ENCODE measurements at regions of chr5 and their contacts with region 1.

Region 1: DNA sequence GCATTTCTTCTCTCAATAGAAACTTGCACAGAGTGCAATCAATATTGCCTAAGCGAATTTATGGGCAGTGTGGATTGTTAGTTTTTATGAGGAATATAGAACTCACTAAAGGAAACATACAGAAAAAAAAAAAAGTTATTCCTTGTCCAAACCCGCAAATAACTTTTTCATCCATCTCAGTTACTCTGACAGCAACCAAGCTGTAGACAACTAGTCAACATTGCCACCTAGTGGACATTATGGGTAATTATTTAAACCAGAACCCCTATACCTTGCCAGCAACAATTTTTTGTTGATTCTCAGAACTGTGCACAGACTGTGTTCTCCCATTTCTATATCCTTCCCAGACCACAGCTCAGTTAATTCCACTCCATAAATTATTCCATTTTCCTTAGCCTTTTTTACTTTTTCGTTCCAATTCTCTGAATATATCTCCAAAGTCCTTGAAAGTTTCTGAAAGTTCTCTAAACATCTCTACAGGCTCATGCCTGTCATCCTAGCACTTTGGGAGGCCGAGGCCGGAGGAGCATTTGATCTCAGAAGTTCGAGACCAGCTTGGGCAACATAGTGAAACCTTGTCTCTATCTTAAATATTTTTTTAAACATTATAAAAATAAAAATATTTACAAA is 2.6 kb upstream of the AFAP1L1 start:
- DNase-seq: no peak
- H3K4me3 ChIP-seq: no peak overlapping the region
- H3K27ac ChIP-seq: no peak overlapping the region
- H3K27me3 ChIP-seq: no peaks in the 10 kb centered on the region
- CTCF ChIP-seq: peak; percentile 48 to 98 (median 82)

Region 2: DNA sequence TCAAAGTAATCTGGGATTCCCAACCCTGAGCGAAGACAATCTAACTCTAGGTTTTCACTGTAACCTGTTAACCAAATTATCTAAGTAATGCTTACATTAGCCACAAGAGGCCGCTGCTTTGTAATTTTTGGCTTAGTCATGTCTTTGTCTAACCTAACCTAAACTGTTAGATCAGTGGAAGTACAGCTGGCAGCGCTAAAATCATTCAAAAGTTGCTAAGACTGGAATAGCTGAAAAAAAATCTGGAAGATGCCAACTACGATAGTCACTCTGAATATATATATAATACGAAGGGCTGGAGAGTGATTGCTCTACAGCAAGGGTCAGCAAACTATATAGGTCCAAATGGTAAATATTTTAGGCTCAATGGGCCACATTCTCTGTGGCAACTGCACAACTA is 825.0 kb before region 1 on chr5:
- intact Hi-C with region 1: loop called in 1 of 2 experiments (anchors 10 kb)
- DNase-seq: peak in 3 of 10 donors; percentile 26 to 56 (median 42)
- H3K4me3 ChIP-seq: no peak overlapping the region
- H3K27ac ChIP-seq: no peak overlapping the region
- H3K27me3 ChIP-seq: no peaks in the 10 kb centered on the region
- CTCF ChIP-seq: peak; percentile 74 to 96 (median 87)

Region 3: DNA sequence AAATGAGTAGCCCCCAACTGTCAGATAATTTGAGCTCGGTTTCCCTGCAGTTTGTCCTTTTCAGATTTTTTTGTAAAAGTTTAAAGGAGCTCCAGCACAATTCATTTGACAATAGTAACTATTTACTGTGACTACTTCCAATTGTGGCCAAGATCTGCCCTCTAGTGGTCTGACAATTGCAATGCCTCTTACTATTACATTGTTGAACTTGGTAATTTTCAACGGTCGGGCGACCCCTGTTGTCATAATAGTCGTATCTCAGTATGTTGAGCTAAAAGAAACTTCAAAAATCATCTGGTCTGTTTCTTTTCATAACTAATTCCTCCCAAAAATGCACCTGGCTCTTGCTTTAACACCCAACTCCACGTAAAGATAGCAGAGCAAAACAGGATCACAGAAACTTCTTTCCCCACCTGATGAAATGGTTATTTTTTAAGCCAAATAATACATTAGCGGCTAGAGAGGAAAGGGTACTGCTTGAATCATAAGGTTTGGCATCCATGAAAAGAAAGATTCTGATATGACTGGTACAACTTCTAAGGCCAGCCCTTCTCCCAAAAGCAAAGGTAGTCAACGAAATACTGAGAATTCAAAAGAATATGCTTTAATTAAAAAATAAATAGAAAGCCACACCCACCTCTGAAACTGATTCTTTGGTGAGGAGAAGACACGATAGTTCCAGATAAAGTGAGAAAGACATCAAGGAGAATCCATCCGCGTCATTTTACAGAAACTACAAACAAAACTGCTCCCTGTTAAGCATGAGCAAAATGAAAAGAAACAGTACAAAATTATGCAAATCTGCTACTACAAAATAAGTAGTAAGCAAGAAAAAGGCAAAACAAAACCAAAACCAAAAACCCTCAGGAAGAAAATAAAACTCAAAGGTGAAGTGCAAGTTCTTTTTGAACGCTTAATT is 537.8 kb before region 1 on chr5:
- intact Hi-C with region 1: loop called (anchors 2 to 10 kb)
- DNase-seq: peak in 9 of 10 donors; percentile 27 to 90 (median 65)
- H3K4me3 ChIP-seq: peak overlapping the region in 16 of 59 donors; percentile 2 to 35 (median 16)
- H3K27ac ChIP-seq: peak overlapping the region in 2 of 59 donors; percentile 0 to 34
- H3K27me3 ChIP-seq: peaks cover 0 to 4% (median 0%) of the 10 kb centered on the region in 45 donors
- CTCF ChIP-seq: peak in 55 of 56 donors; percentile 93 to 100 (median 99)

Region 4: DNA sequence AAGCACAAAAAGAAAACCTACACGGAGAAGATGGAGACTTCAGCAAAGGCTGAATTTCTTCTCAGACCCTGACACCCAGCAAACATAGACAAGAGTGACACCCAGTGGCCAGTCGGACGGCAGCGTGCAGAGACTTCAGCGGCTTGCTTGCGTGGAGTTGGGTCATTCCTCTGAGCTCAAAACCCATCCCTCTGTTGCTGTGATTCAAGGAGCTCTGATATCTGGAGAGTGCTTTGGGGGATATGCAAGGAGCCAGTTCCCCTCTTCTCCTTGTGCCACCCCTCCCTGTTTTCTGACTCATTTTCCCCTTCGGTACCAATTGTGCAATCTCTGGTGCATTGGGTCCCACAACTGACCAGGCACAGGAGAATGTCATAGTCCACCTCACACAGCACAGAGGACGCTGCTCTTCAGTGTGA is 233.7 kb before region 1 on chr5:
- intact Hi-C with region 1: loop called in 1 of 2 experiments (anchors 10 kb)
- DNase-seq: peak; percentile 72 to 88 (median 82)
- H3K4me3 ChIP-seq: no peak overlapping the region
- H3K27ac ChIP-seq: peak overlapping the region in 25 of 59 donors; percentile 1 to 82 (median 24)
- H3K27me3 ChIP-seq: no peaks in the 10 kb centered on the region
- CTCF ChIP-seq: peak; percentile 60 to 95 (median 89)

Region 5: GRCh38 chr5:149063017-149063687 is 205.9 kb before region 1 on chr5 and contains the start of gene SH3TC2:
- intact Hi-C with region 1: loop called in 1 of 2 experiments (anchors 5 kb)
- DNase-seq: peak; percentile 12 to 93 (median 88)
- H3K4me3 ChIP-seq: peak within 1 kb of the TSS; percentile 12 to 72 (median 51)
- H3K27ac ChIP-seq: peak within 1 kb of the TSS; percentile 77 to 99 (median 95)
- H3K27me3 ChIP-seq: peaks cover 0 to 3% (median 0%) of the 10 kb centered on the region in 45 donors
- CTCF ChIP-seq: peak in 9 of 56 donors; percentile 8 to 31 (median 20)
- total RNA-seq, gene SH3TC2: 8.0 to 212 (median 45.8) TPM

Region 6: GRCh38 chr5:149141224-149141956 is 127.7 kb before region 1 on chr5 and contains the start of gene ABLIM3:
- intact Hi-C with region 1: loop called (anchors 2 to 5 kb)
- DNase-seq: peak; percentile 45 to 88 (median 62)
- H3K4me3 ChIP-seq: peak within 1 kb of the TSS; percentile 66 to 99 (median 82)
- H3K27ac ChIP-seq: peak within 1 kb of the TSS in 58 of 59 donors; percentile 3 to 93 (median 82)
- H3K27me3 ChIP-seq: no peaks in the 10 kb centered on the region
- CTCF ChIP-seq: peak; percentile 45 to 98 (median 93)
- total RNA-seq, gene ABLIM3: 26.3 to 60.7 (median 40.9) TPM

Region 7: DNA sequence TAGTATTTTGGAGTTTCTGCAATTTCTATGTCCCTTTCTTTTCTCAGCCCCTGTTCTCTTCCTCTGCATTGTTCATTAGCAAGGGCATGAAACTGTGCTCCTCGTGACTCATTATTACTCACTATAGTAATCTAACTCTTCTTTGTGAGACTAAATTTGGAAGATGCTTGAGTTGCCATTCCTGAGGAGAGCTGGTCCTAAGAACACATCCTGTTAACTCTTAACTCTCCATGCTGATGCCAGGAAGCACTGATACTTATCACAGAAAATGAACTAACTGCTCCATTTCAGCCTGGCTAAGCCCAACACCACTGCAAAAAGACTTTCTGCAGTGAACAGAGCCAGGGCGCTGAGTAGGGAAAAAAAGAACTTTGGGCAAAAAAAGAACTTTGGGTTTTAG is 292.8 kb after region 1 on chr5:
- intact Hi-C with region 1: loop called in 1 of 2 experiments (anchors 5 kb)
- DNase-seq: no peak
- H3K4me3 ChIP-seq: peak overlapping the region in 1 of 59 donors; percentile 10
- H3K27ac ChIP-seq: peak overlapping the region in 30 of 59 donors; percentile 0 to 78 (median 48)
- H3K27me3 ChIP-seq: no peaks in the 10 kb centered on the region
- CTCF ChIP-seq: no peak

Measured in dorsolateral prefrontal cortex (tissue), 120 donors.